ENCODE measurements at regions of chr22 and their contacts with region 1.

Region 1: DNA sequence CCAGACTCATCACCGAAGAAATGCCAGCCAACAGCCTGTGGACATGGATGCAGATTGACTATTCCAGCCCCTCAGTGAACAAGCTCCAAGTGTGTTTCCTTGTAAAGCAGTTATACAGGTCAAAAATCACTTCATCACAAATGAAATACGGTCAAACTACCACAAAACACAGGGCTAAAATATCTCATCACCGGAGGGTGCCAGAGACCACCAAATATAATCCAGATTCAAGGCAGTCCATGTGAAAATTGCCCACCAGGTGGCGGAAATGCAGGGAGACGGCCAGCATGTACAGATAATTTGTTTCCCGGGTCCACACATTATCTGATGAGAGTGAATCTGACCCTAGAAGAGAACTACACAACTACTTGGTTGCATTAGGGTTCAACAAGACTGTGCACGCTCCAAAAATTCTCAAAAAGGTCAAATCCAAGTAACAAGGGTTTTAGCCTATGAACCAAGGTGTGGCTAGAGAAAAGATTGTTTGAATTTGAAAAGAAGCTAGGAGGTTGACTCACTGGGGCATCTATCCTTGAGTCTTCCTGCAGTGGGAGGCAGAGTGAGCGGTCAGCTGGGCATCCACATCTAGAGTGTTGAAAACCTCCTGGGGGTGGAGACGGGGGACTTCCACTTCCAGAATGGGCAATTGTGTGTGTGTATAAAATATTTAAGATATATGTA is 71.7 kb downstream of the IGLL5 start:
- DNase-seq: peak; percentile 71
- H3K4me3 ChIP-seq: no peak overlapping the region
- H3K27ac ChIP-seq: no peak overlapping the region
- H3K4me1 ChIP-seq: no peaks in the 10 kb centered on the region
- H3K27me3 ChIP-seq: no peaks in the 10 kb centered on the region
- CTCF ChIP-seq: peak; percentile 97

Region 2: DNA sequence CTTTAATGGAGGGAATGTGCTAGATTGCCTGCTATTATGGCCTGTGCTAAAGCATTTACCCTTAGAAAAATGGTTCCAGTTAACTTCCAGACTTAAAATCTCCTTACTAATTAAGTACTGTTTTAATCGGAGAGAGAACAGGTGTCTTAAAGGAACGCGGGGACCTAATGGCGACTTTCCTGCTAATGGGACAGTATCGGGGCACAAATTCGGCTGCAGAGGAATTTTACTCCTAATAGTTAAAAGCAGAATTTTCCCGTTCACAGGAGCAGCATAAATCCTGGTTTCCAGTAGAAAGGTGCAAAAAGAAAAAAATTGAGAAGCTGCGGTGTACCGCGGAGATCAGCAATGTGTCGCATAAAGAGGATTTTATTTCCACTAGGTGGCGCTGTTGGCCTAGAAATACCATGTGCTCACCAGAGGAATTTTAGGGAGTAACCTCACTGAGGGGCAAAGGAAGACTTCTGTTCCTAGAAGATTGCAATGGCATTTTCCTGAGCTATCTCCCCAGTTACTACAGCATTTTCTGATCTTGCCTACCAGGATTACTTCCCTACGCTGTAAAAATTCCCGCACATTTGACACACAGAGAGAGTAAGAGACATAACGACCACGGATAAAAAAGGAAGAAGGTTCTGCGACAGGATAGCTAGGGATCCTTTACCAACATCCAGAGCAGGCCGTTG is 495.3 kb before region 1 on chr22:
- intact Hi-C with region 1: loop called (anchors 10 kb)
- DNase-seq: peak; percentile 64
- H3K4me3 ChIP-seq: no peak overlapping the region
- H3K27ac ChIP-seq: no peak overlapping the region
- H3K4me1 ChIP-seq: no peaks in the 10 kb centered on the region
- H3K27me3 ChIP-seq: no peaks in the 10 kb centered on the region
- CTCF ChIP-seq: peak; percentile 72

Region 3: GRCh38 chr22:22848364-22848866 is 110.9 kb before region 1 on chr22:
- intact Hi-C with region 1: loop called (anchors 5 kb)
- DNase-seq: peak; percentile 77
- H3K4me3 ChIP-seq: no peak overlapping the region
- H3K27ac ChIP-seq: no peak overlapping the region
- H3K4me1 ChIP-seq: no peaks in the 10 kb centered on the region
- H3K27me3 ChIP-seq: no peaks in the 10 kb centered on the region
- CTCF ChIP-seq: peak; percentile 92

Region 4: GRCh38 chr22:23128269-23129108 is 169.2 kb after region 1 on chr22:
- intact Hi-C with region 1: loop called (anchors 2 kb)
- DNase-seq: peak; percentile 78
- H3K4me3 ChIP-seq: no peak overlapping the region
- H3K27ac ChIP-seq: no peak overlapping the region
- H3K4me1 ChIP-seq: no peaks in the 10 kb centered on the region
- H3K27me3 ChIP-seq: no peaks in the 10 kb centered on the region
- CTCF ChIP-seq: peak; percentile 82

Region 5: DNA sequence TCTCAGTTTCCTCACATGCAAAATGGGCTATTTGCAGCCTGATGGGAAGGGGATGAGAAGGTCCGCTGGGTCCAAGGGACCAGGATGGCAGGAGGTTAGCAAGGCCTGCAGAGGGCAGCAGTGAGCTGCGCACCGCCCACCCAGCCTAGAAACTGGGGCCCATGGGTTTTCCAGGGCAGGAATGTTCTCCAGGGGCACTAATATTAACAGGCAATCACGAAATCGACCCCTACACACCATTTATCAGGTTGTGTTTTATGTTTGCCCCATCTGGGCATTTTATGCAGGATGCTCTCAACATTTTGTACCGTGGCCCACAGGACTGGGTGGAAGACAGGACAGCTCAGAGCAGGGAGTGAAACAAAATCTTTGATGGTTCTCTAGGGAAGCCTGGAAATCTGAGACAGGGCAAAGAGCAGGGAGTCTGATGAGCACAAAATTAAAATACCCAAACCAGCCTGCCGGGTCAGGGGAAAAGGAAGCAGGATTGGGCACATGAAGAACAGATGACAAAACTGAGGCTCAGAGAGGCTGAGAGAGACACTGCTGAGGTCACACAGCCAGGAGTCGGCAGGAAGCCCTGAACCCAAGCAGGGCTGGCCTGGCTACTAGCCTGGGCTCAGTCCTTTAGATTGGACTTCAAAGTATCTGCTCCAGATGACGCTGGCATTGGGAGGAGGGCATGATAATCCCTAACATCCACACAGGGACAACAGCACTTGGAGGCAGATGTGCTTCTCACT is 219.4 kb after region 1 on chr22:
- intact Hi-C with region 1: no loop called
- DNase-seq: peak; percentile 64
- H3K4me3 ChIP-seq: no peak overlapping the region
- H3K27ac ChIP-seq: no peak overlapping the region
- H3K4me1 ChIP-seq: peaks cover 21% of the 10 kb centered on the region
- H3K27me3 ChIP-seq: no peaks in the 10 kb centered on the region
- CTCF ChIP-seq: peak; percentile 93

Region 6: DNA sequence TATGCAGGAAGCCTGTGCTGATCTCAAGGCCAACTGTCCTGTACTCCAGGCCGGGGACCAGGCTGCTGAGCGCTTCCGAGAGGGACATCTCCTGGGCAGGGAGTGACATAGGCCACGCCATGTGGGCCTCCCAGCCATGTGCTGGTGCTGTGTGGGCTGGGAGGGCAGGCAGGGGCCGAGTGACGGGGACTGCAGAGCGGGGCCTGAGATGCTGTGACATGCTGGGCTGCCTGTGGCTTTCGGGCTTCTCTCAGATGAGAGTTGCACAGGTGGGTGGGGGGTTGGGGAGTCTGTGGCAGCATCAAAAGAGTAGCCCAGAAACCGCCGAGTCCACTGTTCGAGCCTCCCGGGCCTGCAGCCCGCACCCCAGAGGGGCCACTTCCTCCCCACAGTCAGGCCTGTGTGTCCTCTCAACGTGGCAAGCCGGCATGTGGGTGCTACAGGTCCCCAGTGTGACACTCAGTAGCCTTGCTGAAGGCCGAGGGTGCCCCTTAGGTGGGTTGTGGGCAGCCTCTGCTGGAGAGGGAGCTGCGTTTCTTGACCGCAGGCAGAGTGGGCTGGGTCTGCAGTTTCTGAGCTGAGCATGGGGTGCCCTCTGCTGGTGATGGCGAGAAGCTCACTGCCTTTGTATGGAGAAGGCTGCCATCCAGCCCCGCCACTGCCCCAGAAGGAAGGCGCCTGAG is 322.3 kb after region 1 on chr22:
- intact Hi-C with region 1: loop called (anchors 10 kb)
- DNase-seq: peak; percentile 84
- H3K4me3 ChIP-seq: no peak overlapping the region
- H3K27ac ChIP-seq: no peak overlapping the region
- H3K4me1 ChIP-seq: peaks cover 14% of the 10 kb centered on the region
- H3K27me3 ChIP-seq: no peaks in the 10 kb centered on the region
- CTCF ChIP-seq: peak; percentile 87

Region 7: DNA sequence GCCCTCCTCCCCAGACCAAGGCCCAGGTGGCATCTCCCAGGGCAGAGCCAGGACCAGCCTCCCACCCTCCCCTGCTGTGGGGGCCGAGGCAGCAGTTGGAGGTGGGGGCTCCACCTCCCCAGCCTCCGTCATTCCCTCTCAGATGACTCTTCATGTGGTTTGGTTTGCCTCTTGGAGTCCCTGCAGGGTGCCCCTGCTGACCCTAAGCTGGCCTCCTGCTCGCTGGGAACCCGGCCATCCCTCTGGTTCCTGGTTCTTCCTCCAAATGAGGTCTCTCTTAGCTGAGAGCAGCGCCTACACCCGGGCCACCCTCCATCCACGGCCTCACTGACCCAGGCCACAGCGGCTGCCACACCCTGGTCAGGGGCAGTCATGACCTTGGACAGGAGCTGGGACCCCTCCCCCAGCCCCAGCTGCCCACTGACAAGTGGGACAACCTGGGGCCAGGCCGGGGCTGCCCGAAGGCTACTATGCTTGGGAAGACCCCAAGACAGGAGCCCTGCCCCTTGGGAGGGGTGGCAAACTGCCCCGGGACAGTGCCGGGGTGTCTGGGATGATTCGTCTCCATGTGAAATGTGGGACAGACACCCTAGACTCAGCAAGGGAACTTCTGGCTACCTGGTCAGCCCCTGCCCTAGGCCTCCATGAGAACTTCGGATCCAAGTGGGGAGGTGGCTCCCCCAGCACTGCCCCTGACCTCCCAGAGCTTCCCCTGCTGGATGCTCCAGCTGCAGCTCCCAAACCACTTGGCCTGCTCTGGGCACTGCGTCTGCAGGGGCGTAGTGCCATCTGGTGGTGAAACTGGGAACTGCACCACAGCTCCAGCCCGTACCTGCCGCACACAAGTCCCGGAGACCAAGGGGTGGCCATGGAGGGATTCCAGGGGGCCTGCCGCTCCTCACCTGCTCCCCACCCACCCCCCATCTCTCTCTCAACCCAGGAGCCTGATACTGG is 426.3 kb after region 1 on chr22:
- intact Hi-C with region 1: loop called (anchors 10 kb)
- DNase-seq: peak; percentile 85
- H3K4me3 ChIP-seq: no peak overlapping the region
- H3K27ac ChIP-seq: no peak overlapping the region
- H3K4me1 ChIP-seq: no peaks in the 10 kb centered on the region
- H3K27me3 ChIP-seq: no peaks in the 10 kb centered on the region
- CTCF ChIP-seq: peak; percentile 98